ENCODE measurements at regions of chr16 and their contacts with region 1.

Region 1: DNA sequence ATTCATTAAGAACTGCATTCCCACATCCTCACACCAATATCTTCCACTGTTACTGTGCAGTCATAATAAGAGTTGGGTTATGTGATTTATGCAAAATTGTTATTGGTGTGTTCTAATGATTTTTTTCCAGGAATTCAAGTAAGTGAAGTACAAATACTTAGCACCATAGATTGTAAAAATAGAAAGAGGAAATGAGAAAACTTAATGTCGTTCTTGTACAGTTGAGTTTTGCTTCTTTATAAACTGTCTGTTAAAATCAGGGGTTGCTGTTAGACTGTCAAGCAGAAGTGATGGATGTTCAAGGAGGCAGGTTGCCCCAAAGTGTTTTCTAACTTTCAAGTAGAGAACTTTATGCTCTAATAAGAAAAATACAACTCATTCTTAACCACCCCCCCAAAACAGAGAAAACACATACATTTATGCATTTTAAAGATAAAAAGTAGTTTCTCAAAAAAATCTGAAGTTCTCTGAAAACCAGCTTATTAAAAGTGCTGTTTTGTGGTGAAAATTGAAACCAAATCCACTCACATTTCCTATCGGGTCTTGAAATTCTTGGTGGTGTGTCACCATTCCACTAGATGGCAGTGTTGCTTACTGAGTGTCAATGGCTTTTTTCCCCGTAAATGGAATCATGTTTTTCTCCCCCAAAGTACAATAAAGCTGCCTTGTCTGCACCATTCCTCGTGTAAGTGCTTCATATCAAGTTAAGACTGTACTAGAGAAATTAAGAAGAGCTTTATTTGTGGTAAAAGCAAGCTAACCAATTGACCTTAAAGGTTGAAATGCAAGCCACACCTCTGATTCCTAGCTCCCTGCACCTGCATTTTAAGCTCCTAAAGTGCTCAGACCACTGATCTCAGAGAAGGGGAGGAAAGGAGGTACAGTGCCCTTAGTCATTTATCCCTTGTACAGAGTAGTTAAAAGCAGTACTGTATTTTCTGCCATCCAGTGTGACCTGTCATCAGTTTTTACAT is 4.7 kb upstream of the IGSF6 start:
- DNase-seq: no peak
- ATAC-seq: no peak

Region 2: GRCh38 chr16:21708533-21709115 is 51.5 kb after region 1 on chr16:
- intact Hi-C with region 1: loop called (anchors 2 to 5 kb)
- DNase-seq: peak; percentile 56
- ATAC-seq: peak; percentile 49 to 50

Region 3: GRCh38 chr16:21713549-21714368 is 56.7 kb after region 1 on chr16:
- intact Hi-C with region 1: loop called (anchors 2 to 5 kb)
- DNase-seq: no peak
- ATAC-seq: no peak

Region 4: DNA sequence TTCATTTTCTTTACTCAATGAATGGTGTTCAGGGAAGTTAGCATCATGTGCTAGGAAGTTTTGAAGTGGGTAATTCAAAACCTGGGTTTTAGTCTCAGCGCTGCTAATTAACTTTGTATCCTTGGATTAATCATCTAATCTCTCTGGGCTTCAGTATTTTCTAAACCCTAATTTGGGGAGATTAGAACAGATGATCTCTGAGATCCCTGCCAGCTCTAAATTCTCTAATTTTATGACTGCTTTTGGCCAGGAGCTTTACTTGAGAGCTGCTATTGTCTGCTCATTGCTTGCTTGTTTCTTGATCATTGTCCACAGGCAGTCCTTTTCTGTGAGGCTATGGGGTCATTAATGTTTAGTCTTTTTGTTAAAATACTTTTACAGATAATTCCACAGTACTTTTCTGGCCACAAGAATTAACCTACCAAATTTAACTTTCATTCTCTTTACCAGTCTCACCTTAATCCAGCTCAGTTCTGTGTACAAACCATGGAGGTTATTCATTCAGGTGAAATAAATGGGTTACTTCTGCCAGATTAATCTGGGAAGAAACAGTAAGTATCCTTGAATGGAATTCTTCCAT is 406.9 kb after region 1 on chr16:
- intact Hi-C with region 1: no loop called
- DNase-seq: no peak
- ATAC-seq: no peak